CD8-positive, alpha-beta T cell (primary cell): ENCODE measurements at regions of chr11 and their contacts with region 1.

Region 1: GRCh38 chr11:45079943-45080719 is 66.3 kb upstream of the PRDM11 start:
- DNase-seq: peak in 8 of 9 experiments; percentile 48 to 87 (median 68)
- ATAC-seq: peak; percentile 83
- H3K4me3 ChIP-seq: peak overlapping the region; percentile 10 to 25
- H3K4me3 Mint-ChIP-seq: peak overlapping the region; percentile 62
- H3K27ac ChIP-seq: peak overlapping the region; percentile 31 to 69
- H3K27ac Mint-ChIP-seq: peak overlapping the region; percentile 96
- H3K4me1 ChIP-seq: peaks cover 51% of the 10 kb centered on the region
- H3K4me1 Mint-ChIP-seq: peaks cover 54% of the 10 kb centered on the region
- H3K27me3 ChIP-seq: no peaks in the 10 kb centered on the region
- H3K27me3 Mint-ChIP-seq: no peaks in the 10 kb centered on the region
- CTCF ChIP-seq: no peak

Region 2: DNA sequence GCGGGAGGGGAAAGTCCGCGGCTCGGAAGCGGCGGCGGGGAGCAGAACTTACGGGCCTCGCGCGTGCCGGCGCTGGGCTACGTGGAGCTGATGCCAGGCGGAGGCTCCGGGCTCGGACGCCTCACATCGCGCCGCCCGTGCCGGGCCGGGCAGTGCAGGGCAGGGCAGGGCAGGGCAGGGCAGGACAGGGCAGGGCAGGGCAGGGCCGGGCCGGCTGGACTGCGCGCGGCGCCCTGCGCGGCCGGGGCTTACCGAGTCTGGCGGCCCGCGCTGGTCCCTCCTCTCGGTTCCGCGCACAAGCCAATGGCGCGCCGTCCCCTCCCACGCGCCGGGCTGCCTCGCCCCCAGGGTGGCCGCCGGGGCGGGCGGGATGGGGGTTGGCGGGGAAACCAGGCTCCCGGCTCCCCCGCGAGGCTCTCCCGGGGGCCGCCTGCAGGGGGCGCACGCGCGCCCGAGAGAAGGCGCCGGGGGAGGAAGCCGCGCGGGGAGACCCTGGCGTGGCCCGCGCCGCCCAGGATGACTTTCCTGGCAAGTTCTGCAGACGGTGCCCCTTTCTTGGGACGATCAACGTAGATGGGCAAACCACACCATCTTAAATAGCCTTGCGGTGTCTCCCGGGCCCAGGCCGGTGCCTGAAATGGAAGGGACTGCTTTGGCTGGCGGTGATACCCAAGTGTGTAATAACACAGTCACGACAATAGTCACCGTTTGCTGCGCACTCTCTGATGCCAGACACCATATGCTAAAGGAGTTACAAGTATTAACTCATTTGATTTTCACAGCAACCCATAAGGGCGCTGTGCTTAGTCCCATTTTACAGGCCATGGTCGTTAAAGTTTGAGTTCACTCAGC is 129.3 kb before region 1 on chr11 and contains the start of gene TP53I11:
- CTCF ChIA-PET with region 1: interaction called, 1,504 read pairs
- POLR2A ChIA-PET with region 1: interaction called, 3 read pairs
- intact Hi-C with region 1: loop called in 1 of 2 experiments (anchors 5 kb)
- DNase-seq: peak; percentile 31 to 82 (median 52)
- ATAC-seq: peak; percentile 79
- H3K4me3 ChIP-seq: peak within 1 kb of the TSS; percentile 56 to 73
- H3K4me3 Mint-ChIP-seq: peak within 1 kb of the TSS; percentile 86
- H3K27ac ChIP-seq: no peak within 1 kb of the TSS
- H3K27ac Mint-ChIP-seq: no peak within 1 kb of the TSS
- H3K4me1 ChIP-seq: no peaks in the 10 kb centered on the region
- H3K4me1 Mint-ChIP-seq: peaks cover 7% of the 10 kb centered on the region
- H3K27me3 ChIP-seq: no peaks in the 10 kb centered on the region
- H3K27me3 Mint-ChIP-seq: no peaks in the 10 kb centered on the region
- CTCF ChIP-seq: peak; percentile 47
- total RNA-seq, gene TP53I11: 4.8 to 6.8 TPM

Region 3: GRCh38 chr11:45158198-45158731 is 78.1 kb after region 1 on chr11:
- CTCF ChIA-PET with region 1: no interaction called
- POLR2A ChIA-PET with region 1: no interaction called
- intact Hi-C with region 1: no loop called
- DNase-seq: no peak
- ATAC-seq: no peak
- H3K4me3 ChIP-seq: no peak overlapping the region
- H3K4me3 Mint-ChIP-seq: no peak overlapping the region
- H3K27ac ChIP-seq: no peak overlapping the region
- H3K27ac Mint-ChIP-seq: no peak overlapping the region
- H3K4me1 ChIP-seq: no peaks in the 10 kb centered on the region
- H3K4me1 Mint-ChIP-seq: peaks cover 42% of the 10 kb centered on the region
- H3K27me3 ChIP-seq: no peaks in the 10 kb centered on the region
- H3K27me3 Mint-ChIP-seq: no peaks in the 10 kb centered on the region
- CTCF ChIP-seq: no peak

Region 4: DNA sequence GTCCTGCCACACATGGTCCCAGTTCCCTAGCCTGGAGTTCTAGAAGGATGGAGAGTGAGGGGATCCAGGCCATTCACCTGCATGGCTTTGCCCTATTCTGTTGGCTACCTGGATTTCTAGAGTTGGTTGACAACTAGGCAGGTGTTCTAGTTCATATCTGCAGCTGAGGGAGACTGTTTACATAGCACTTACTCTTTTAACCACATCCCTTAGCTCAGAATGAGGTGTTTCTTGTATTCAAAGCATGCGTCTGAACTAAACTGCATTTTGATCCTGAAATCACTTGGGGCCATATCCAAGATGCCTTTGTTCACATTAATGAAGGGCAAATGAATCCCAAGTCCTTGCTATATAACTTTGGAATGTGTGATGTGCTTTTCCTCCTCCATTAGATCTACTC is 145.1 kb after region 1 on chr11:
- CTCF ChIA-PET with region 1: no interaction called
- POLR2A ChIA-PET with region 1: no interaction called
- intact Hi-C with region 1: no loop called
- DNase-seq: no peak
- ATAC-seq: no peak
- H3K4me3 ChIP-seq: no peak overlapping the region
- H3K4me3 Mint-ChIP-seq: no peak overlapping the region
- H3K27ac ChIP-seq: no peak overlapping the region
- H3K27ac Mint-ChIP-seq: no peak overlapping the region
- H3K4me1 ChIP-seq: no peaks in the 10 kb centered on the region
- H3K4me1 Mint-ChIP-seq: no peaks in the 10 kb centered on the region
- H3K27me3 ChIP-seq: no peaks in the 10 kb centered on the region
- H3K27me3 Mint-ChIP-seq: no peaks in the 10 kb centered on the region
- CTCF ChIP-seq: no peak

Region 5: GRCh38 chr11:45247433-45247832 is 167.3 kb after region 1 on chr11:
- CTCF ChIA-PET with region 1: no interaction called
- POLR2A ChIA-PET with region 1: no interaction called
- intact Hi-C with region 1: no loop called
- DNase-seq: no peak
- ATAC-seq: no peak
- H3K4me3 ChIP-seq: no peak overlapping the region
- H3K4me3 Mint-ChIP-seq: no peak overlapping the region
- H3K27ac ChIP-seq: no peak overlapping the region
- H3K27ac Mint-ChIP-seq: no peak overlapping the region
- H3K4me1 ChIP-seq: no peaks in the 10 kb centered on the region
- H3K4me1 Mint-ChIP-seq: no peaks in the 10 kb centered on the region
- H3K27me3 ChIP-seq: no peaks in the 10 kb centered on the region
- H3K27me3 Mint-ChIP-seq: peaks cover 14% of the 10 kb centered on the region
- CTCF ChIP-seq: no peak